GM23248 (cell line): ENCODE measurements at regions of chr7 and their contacts with region 1.

Region 1: GRCh38 chr7:100901921-100902332 is 6.2 kb upstream of the ACHE start:
- DNase-seq: no peak
- H3K4me3 ChIP-seq: no peak overlapping the region
- H3K27ac ChIP-seq: no peak overlapping the region
- H3K4me1 ChIP-seq: no peaks in the 10 kb centered on the region
- H3K27me3 ChIP-seq: peaks cover 24% of the 10 kb centered on the region

Region 2: GRCh38 chr7:100208911-100209408 is 693.0 kb before region 1 on chr7:
- in situ Hi-C with region 1: no loop called
- DNase-seq: no peak
- H3K4me3 ChIP-seq: no peak overlapping the region
- H3K27ac ChIP-seq: no peak overlapping the region
- H3K4me1 ChIP-seq: no peaks in the 10 kb centered on the region
- H3K27me3 ChIP-seq: no peaks in the 10 kb centered on the region

Region 3: DNA sequence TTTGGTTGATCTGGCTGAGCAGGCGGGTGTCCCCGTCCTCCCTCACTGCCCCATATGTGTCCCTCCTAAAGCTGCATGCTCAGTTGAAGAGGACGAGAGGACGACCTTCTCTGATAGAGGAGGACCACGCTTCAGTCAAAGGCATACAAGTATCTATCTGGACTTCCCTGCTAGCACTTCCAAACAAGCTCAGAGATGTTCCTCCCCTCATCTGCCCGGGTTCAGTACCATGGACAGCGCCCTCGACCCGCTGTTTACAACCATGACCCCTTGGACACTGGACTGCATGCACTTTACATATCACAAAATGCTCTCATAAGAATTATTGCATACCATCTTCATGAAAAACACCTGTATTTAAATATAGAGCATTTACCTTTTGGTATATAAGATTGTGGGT is 156.4 kb after region 1 on chr7:
- in situ Hi-C with region 1: loop called (anchors 5 kb)
- DNase-seq: peak; percentile 52
- H3K4me3 ChIP-seq: no peak overlapping the region
- H3K27ac ChIP-seq: no peak overlapping the region
- H3K4me1 ChIP-seq: no peaks in the 10 kb centered on the region
- H3K27me3 ChIP-seq: peaks cover 51% of the 10 kb centered on the region